Left cardiac atrium (tissue), 4 donors: ENCODE measurements at regions of chr12 and their contacts with region 1.

Region 1: GRCh38 chr12:117874842-117875434 is 93.9 kb downstream of the KSR2 start:
- DNase-seq: peak; percentile 76
- ATAC-seq: peak; percentile 70 to 76

Region 2: GRCh38 chr12:118035246-118036041 is 160.5 kb after region 1 on chr12:
- intact Hi-C with region 1: loop called in 1 of 2 experiments (anchors 10 kb)
- DNase-seq: no peak
- ATAC-seq: peak in 1 of 2 donors; percentile 34